ENCODE measurements at regions of chr19 and their contacts with region 1.

Region 1: GRCh38 chr19:1241417-1242095 is at the start of gene ATP5F1D:
- DNase-seq: peak; percentile 90 to 97 (median 93)
- H3K4me3 ChIP-seq: peak within 1 kb of the TSS; percentile 69 to 99 (median 91)
- H3K27ac ChIP-seq: peak within 1 kb of the TSS; percentile 80 to 100 (median 98)
- H3K27me3 ChIP-seq: no peaks in the 10 kb centered on the region
- CTCF ChIP-seq: peak in 38 of 56 donors; percentile 7 to 63 (median 32)
- total RNA-seq, gene ATP5F1D: 170 to 316 (median 242) TPM

Region 2: DNA sequence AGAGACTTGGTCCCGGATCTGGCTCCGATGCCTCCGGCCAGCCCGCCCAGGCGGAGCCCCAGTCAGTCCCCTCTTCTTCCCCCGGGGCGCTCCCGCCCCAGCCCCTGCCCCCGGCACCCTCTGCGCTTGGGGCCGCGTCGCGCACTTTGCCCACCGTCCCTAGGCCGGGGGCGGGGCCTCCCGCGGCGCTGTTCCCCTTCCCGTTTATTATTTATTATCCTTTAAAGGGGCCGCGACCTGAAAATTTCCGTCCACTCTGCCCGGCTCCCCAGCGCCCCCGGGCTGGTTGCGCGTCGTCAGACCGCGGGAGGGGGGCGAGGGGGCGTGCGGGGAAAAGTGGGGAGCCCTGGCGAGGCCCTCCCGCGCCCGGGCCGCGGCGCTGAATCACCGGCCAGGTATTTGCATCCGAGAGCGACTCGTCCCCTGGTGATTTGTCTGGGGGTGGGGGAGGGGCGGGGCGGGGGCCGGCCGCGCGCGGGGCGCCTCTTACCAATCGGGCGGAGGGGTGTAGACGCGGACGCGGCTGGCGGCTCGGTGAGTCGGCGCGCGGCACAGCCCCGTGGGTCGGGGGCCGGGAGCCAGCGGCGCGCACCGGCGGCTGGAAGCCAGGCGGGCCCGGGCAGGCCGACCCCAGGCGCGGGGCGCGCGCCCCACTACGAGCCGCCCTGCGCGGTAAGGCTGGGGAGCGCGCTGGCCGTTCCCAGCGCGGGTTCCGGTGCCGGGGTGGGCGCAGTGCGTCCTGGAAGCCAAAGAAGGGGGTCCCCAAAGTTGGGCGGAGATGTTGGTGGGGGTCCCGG is 315.8 kb before region 1 on chr19 and contains the start of gene ARID3A:
- intact Hi-C with region 1: loop called (anchors 5 to 10 kb)
- DNase-seq: peak; percentile 69 to 86 (median 76)
- H3K4me3 ChIP-seq: peak within 1 kb of the TSS; percentile 65 to 95 (median 82)
- H3K27ac ChIP-seq: peak within 1 kb of the TSS in 57 of 59 donors; percentile 29 to 88 (median 77)
- H3K27me3 ChIP-seq: peaks cover 0 to 8% (median 6%) of the 10 kb centered on the region in 45 donors
- CTCF ChIP-seq: peak in 23 of 56 donors; percentile 4 to 51 (median 15)
- total RNA-seq, gene ARID3A: 3.8 to 17.6 (median 8.7) TPM

Region 3: DNA sequence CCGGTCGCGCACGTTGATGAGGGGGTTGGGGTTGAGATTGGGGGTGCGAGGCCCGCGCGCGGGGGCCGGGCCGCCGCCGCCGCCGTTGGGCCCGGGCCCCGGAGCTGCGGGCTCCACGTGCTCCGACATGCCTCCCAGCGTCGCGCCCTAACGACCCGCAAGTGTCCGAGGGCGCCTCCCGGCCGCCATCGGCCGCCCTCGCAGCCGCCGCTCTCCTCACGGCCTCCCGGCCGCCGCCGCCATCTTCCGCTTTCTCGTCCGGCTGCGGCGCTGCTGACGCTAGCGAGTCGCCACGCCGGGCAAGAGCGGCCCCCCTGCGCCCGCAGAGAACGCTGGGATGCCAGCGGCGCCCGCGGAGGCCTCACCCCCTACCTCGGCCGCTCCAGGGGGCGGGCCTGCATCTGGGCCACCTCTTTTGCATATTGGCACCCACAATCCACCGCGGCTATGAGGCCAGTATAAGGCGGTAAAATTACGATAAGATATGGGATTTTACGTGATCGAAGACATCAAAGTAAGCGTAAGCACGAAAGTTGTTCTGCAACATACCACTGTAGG is 220.6 kb before region 1 on chr19 and contains the start of gene TMEM259:
- intact Hi-C with region 1: loop called in 1 of 2 experiments (anchors 5 kb)
- DNase-seq: peak; percentile 96 to 99 (median 98)
- H3K4me3 ChIP-seq: peak within 1 kb of the TSS; percentile 43 to 95 (median 84)
- H3K27ac ChIP-seq: peak within 1 kb of the TSS; percentile 54 to 99 (median 95)
- H3K27me3 ChIP-seq: peaks cover 0 to 17% (median 4%) of the 10 kb centered on the region in 45 donors
- CTCF ChIP-seq: peak in 43 of 56 donors; percentile 4 to 61 (median 40)
- total RNA-seq, gene TMEM259: 98.2 to 236 (median 132) TPM

Region 4: GRCh38 chr19:1173845-1174809 is 67.4 kb before region 1 on chr19 and contains the start of gene SBNO2:
- intact Hi-C with region 1: loop called in 1 of 2 experiments (anchors 5 kb)
- DNase-seq: peak; percentile 66 to 90 (median 76)
- H3K4me3 ChIP-seq: peak within 1 kb of the TSS; percentile 58 to 97 (median 80)
- H3K27ac ChIP-seq: peak within 1 kb of the TSS in 56 of 59 donors; percentile 25 to 92 (median 84)
- H3K27me3 ChIP-seq: no peaks in the 10 kb centered on the region
- CTCF ChIP-seq: peak in 19 of 56 donors; percentile 7 to 38 (median 17)
- total RNA-seq, gene SBNO2: 10.1 to 52.7 (median 22.7) TPM

Region 5: GRCh38 chr19:1266916-1267476 is 25.4 kb after region 1 on chr19:
- intact Hi-C with region 1: loop called (anchors 1 kb)
- DNase-seq: peak in 6 of 10 donors; percentile 65 to 89 (median 76)
- H3K4me3 ChIP-seq: peak overlapping the region; percentile 39 to 70 (median 58)
- H3K27ac ChIP-seq: peak overlapping the region; percentile 20 to 100 (median 96)
- H3K27me3 ChIP-seq: no peaks in the 10 kb centered on the region
- CTCF ChIP-seq: peak in 55 of 56 donors; percentile 78 to 100 (median 98)